Cardiac septum (tissue), 1 donor: ENCODE measurements at regions of chr11 and their contacts with region 1.

Region 1: GRCh38 chr11:12813371-12814225 is 139.4 kb downstream of the TEAD1 start:
- DNase-seq: no peak

Region 2: GRCh38 chr11:12235947-12236743 is 577.5 kb before region 1 on chr11:
- intact Hi-C with region 1: no loop called
- DNase-seq: no peak

Region 3: GRCh38 chr11:12581923-12582322 is 231.7 kb before region 1 on chr11:
- intact Hi-C with region 1: no loop called
- DNase-seq: no peak

Region 4: GRCh38 chr11:12599408-12600143 is 214.0 kb before region 1 on chr11:
- intact Hi-C with region 1: loop called (anchors 10 kb)
- DNase-seq: peak; percentile 75

Region 5: DNA sequence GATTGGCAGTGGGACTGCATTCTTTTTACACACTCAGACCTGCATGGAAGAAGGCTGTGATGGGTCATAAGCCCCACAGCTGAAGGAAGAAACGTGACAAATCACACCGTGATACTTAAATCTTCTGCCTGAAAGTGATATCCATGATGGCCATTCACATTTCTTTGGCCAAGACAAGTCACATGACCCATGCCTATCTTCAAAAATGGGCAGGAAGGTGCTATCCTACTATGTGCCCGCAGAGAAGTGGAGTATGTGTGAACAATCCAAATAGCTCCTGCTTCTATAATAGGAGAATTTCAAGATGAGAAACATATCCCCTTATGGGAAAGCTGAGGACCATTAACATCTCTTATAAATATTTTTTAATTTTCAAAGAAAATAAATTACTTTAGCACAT is 196.0 kb before region 1 on chr11:
- intact Hi-C with region 1: no loop called
- DNase-seq: no peak

Region 6: GRCh38 chr11:12769834-12770345 is 43.7 kb before region 1 on chr11:
- intact Hi-C with region 1: loop called (anchors 5 kb)
- DNase-seq: no peak

Region 7: DNA sequence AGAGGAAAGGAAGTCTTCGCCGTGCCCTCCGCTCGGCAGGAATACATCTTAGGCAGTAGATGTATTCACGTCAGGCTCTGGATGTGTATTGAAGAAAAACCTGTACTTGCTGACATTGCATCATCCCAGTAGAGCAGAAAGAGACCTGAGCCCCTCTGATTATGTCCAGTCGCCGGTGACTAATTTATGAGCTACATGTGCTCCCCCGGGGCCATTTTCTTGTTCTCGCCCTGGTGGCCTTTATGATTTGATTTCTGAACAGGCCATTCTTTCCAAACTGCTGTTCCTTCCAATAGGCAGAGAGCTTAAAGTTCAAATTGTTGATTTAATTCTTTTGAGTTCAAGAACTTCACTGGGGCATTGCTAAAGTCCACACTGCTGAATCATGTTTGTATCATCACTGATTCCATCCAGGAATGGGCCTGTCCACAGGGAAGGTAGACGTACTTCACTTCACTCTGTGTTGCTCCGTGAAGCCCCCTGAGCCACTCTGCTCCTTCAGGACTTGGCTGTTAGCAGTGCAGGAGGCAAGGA is 58.3 kb after region 1 on chr11:
- intact Hi-C with region 1: no loop called
- DNase-seq: no peak

Region 8: DNA sequence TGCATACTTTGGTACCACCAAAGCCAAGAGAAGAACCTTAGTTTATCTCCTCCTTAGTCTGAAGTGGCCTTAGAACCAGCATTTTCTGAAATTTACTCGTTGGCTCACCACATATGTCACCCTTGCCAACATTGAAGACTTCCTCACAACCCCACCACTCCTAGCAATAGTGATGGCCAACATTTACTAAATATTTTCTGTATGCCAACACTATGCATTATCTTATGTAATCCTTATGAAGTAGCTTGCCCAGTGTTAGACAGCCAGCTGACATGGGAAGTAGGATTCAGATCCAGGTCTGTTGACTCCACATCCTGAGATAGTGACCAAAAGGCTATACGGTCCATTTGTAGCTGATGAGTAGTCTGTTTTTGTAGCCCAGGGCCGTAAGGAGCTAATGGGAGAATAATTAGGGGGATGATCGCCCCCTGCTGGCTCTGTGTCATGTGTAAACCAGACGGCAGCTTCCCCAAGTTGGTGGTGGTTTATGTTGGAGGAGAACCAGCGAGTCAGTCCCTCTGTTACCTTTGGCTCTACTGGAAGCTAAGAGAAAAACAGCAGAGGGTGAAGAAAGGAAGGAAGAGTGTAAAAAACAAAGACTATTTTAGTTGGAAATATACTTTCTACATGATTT is 75.0 kb after region 1 on chr11:
- intact Hi-C with region 1: loop called (anchors 5 kb)
- DNase-seq: peak; percentile 85